K562 (cell line): ENCODE measurements at regions of chr1 and their contacts with region 1.

Region 1: GRCh38 chr1:36223993-36224536 is at the start of gene THRAP3:
- DNase-seq: peak; percentile 98 to 100 (median 98)
- ATAC-seq: peak; percentile 94
- H3K4me3 ChIP-seq: peak within 1 kb of the TSS; percentile 75
- H3K27ac ChIP-seq: peak within 1 kb of the TSS; percentile 93
- H3K4me1 ChIP-seq: peaks cover 14 to 15% of the 10 kb centered on the region in 2 experiments
- H3K27me3 ChIP-seq: no peaks in the 10 kb centered on the region
- CTCF ChIP-seq: 0 out of 6 replicates have a peak, but pooled peaks of 1 of the 3 experiments have one; percentile 7
- EP300 ChIP-seq: peak; percentile 40; the same call in 1 of the 2 replicates
- POLR2A ChIP-seq: peak; percentile 96
- RAD21 ChIP-seq: no peak
- polyA plus RNA-seq, gene THRAP3: 66.2 to 135 TPM

Region 2: DNA sequence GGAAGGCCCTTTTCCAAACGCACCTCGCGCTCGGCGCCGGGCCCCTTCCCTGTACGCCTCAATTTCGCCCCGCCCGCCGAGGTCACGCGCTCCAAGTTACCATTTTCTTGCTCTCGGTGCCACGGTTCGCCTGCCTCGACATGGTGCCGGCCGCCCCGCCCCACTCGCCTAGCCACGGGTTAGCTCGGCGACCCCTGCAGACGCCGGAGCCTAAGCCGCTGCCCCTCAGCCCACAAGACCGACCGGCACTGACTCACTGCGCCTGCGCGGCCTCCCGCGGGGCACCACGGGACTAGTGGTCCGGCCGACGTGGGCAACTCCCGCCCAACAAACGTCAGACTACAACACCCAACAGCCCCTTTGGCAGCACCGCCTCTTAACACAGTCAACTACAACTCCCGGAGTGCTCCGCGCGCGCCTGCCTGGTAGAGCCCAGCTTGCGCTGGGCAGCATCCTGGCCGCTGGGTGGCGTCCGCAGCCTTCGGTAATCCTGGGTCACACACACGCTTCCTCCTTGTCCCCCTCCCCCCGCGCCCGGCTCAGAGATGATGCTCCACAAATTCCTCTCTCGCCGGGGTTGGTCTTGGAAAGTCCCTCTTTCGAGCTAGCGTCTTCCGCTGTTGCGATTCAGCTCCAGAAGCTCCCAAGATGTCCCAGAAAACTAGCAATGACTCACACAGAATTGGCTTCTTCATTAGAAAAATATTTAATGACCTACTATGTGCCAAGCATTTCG is 74.7 kb before region 1 on chr1 and contains the start of gene TRAPPC3:
- CTCF ChIA-PET with region 1: no interaction called
- POLR2A ChIA-PET with region 1: interaction called, 17 read pairs
- in situ Hi-C with region 1: no loop called
- intact Hi-C with region 1: loop called (anchors 2 kb)
- DNase-seq: peak; percentile 98 to 100 (median 99)
- ATAC-seq: peak; percentile 95
- H3K4me3 ChIP-seq: peak within 1 kb of the TSS; percentile 69
- H3K27ac ChIP-seq: peak within 1 kb of the TSS; percentile 87
- H3K4me1 ChIP-seq: peaks cover 31 to 34% of the 10 kb centered on the region in 2 experiments
- H3K27me3 ChIP-seq: no peaks in the 10 kb centered on the region
- CTCF ChIP-seq: peak; percentile 97 to 99 (median 99)
- EP300 ChIP-seq: peak; percentile 43; the same call in 1 of the 2 replicates
- POLR2A ChIP-seq: peak; percentile 95
- RAD21 ChIP-seq: peak; percentile 99 to 100
- polyA plus RNA-seq, gene TRAPPC3: 20.6 to 41.8 TPM

Region 3: GRCh38 chr1:36208978-36209703 is 14.9 kb before region 1 on chr1:
- CTCF ChIA-PET with region 1: no interaction called
- POLR2A ChIA-PET with region 1: interaction called, 48 read pairs
- in situ Hi-C with region 1: no loop called
- intact Hi-C with region 1: no loop called
- DNase-seq: peak in 1 of 4 experiments; percentile 21
- ATAC-seq: 0 out of 3 replicates have a peak, but pooled peaks have one; percentile 14
- H3K4me3 ChIP-seq: no peak overlapping the region
- H3K27ac ChIP-seq: no peak overlapping the region
- H3K4me1 ChIP-seq: peaks cover 7 to 12% of the 10 kb centered on the region in 2 experiments; a peak in 3 of 5 replicates
- H3K27me3 ChIP-seq: no peaks in the 10 kb centered on the region
- CTCF ChIP-seq: peak in 1 of 3 experiments; percentile 19; a peak in 1 of 6 replicates
- EP300 ChIP-seq: no peak
- POLR2A ChIP-seq: no peak
- RAD21 ChIP-seq: peak in 1 of 2 experiments; percentile 40; a peak in 2 of 4 replicates

Region 4: DNA sequence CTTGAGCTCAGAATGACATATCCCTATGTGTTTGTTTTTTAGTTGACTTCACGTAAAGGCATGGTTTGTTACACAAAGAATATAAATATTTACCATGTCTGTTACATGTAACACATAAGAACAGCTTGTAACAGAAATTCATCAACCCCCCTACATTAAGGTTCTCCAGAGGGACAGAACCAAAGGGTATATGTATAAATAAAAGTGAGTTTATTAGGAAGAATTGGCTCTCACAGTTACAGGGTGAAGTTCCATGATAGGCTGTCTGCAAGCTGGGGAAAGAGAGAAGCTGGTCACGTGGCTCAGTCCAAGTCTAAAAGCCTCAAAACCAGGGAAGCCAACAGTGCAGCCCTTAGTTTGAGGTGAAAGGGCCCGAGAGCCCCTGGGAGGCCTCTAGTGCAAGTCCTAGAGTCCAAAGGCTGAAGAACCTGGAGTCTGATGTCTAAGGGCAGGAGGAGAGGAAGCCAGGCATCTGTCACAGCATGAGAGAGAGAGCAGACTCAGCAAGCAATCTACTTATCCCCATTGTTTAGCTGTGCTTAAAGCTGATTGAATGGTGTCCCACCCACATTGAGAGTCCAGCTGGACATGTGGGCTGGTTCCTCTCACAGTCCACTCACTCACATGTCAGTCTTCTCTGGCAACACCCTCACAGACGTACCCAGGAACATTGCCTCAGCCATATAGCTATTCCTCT is 16.0 kb after region 1 on chr1:
- CTCF ChIA-PET with region 1: no interaction called
- POLR2A ChIA-PET with region 1: interaction called, 67 read pairs
- in situ Hi-C with region 1: no loop called
- intact Hi-C with region 1: no loop called
- DNase-seq: peak in 1 of 4 experiments; percentile 24
- ATAC-seq: peak; percentile 54
- H3K4me3 ChIP-seq: no peak overlapping the region
- H3K27ac ChIP-seq: peak overlapping the region; percentile 15; the same call in 1 of the 3 replicates
- H3K4me1 ChIP-seq: peaks cover 6% of the 10 kb centered on the region in 2 experiments; a peak in 4 of 5 replicates
- H3K27me3 ChIP-seq: no peaks in the 10 kb centered on the region
- CTCF ChIP-seq: no peak
- EP300 ChIP-seq: no peak
- POLR2A ChIP-seq: no peak
- RAD21 ChIP-seq: no peak

Region 5: GRCh38 chr1:36248250-36248894 is 24.3 kb after region 1 on chr1:
- CTCF ChIA-PET with region 1: no interaction called
- POLR2A ChIA-PET with region 1: interaction called, 28 read pairs
- in situ Hi-C with region 1: no loop called
- intact Hi-C with region 1: loop called (anchors 2 kb)
- DNase-seq: peak in 2 of 4 experiments; percentile 61 to 93
- ATAC-seq: peak; percentile 97
- H3K4me3 ChIP-seq: no peak overlapping the region
- H3K27ac ChIP-seq: peak overlapping the region; percentile 93
- H3K4me1 ChIP-seq: peaks cover 16 to 31% of the 10 kb centered on the region in 2 experiments; a peak in 4 of 5 replicates
- H3K27me3 ChIP-seq: no peaks in the 10 kb centered on the region
- CTCF ChIP-seq: no peak
- EP300 ChIP-seq: peak; percentile 75
- POLR2A ChIP-seq: no peak
- RAD21 ChIP-seq: 0 out of 4 replicates have a peak, but pooled peaks of 1 of the 2 experiments have one; percentile 11

Region 6: DNA sequence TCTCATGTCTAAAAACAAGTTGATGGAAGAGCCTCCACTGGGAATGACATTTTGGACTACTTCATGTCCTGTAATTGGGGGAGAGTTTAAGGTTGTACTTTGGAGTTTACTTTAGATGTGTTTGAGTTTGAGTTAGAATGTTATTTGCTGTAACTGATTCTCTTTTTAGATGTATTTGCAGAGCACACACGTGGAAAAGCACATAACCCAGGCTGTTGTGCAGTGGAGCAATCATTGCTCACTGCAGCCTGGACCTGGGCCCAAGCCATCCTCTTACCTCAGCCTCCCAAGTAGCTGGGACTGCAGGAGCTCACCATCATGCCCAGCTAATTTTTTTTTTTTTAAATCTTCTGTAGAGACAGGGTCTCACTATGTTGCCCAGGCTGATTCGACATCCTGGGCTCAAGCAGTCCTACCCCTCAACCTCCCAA is 45.4 kb after region 1 on chr1:
- CTCF ChIA-PET with region 1: no interaction called
- POLR2A ChIA-PET with region 1: interaction called, 4 read pairs
- in situ Hi-C with region 1: no loop called
- intact Hi-C with region 1: loop called (anchors 2 kb)
- DNase-seq: no peak
- ATAC-seq: no peak
- H3K4me3 ChIP-seq: no peak overlapping the region
- H3K27ac ChIP-seq: no peak overlapping the region
- H3K4me1 ChIP-seq: peaks cover 5 to 21% of the 10 kb centered on the region in 2 experiments; a peak in 4 of 5 replicates
- H3K27me3 ChIP-seq: no peaks in the 10 kb centered on the region
- CTCF ChIP-seq: no peak
- EP300 ChIP-seq: no peak
- POLR2A ChIP-seq: no peak
- RAD21 ChIP-seq: no peak

Region 7: DNA sequence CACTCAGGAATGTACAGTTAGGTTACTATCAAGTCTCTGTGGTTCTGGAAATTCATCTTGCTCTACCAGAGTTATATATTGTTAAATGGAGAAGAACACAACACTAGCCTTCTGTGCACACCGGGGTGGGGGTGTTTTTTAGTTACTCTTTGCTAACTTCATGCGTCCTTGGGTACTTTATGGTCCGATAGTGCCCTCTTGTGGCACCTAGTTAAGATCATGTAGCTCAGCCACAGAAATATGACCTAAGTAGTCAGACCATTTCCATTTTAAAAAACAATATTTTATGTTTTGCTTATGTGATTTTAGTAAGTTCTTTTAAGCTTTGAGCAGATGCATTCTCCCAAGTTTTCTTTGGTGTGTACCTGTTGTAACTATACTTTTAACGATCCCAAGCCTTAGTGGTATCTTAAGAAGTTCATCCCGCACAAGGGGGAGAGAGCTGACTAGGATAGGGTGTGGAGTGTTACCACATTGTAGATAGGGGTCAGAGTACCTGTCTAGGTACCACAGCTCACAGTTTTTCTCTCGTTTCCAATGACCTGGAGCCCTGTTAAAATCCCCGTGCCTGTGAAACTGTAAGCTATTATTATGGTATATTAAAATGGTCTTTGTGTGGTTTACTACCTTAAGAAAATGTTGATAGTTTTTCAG is 61.5 kb after region 1 on chr1:
- CTCF ChIA-PET with region 1: no interaction called
- POLR2A ChIA-PET with region 1: interaction called, 5 read pairs
- in situ Hi-C with region 1: no loop called
- intact Hi-C with region 1: loop called (anchors 1 kb)
- DNase-seq: peak; percentile 77 to 93 (median 80)
- ATAC-seq: peak; percentile 95
- H3K4me3 ChIP-seq: no peak overlapping the region
- H3K27ac ChIP-seq: no peak overlapping the region
- H3K4me1 ChIP-seq: no peaks in the 10 kb centered on the region
- H3K27me3 ChIP-seq: no peaks in the 10 kb centered on the region
- CTCF ChIP-seq: peak; percentile 77 to 91 (median 81)
- EP300 ChIP-seq: no peak
- POLR2A ChIP-seq: no peak
- RAD21 ChIP-seq: peak; percentile 88 to 93

Region 8: GRCh38 chr1:36369061-36369861 is 145.2 kb after region 1 on chr1:
- CTCF ChIA-PET with region 1: no interaction called
- POLR2A ChIA-PET with region 1: no interaction called
- in situ Hi-C with region 1: no loop called
- intact Hi-C with region 1: no loop called
- DNase-seq: peak; percentile 89 to 91 (median 89)
- ATAC-seq: peak; percentile 61
- H3K4me3 ChIP-seq: no peak overlapping the region
- H3K27ac ChIP-seq: no peak overlapping the region; the same call in 2 of the 3 replicates
- H3K4me1 ChIP-seq: peaks cover 41 to 51% of the 10 kb centered on the region in 2 experiments
- H3K27me3 ChIP-seq: no peaks in the 10 kb centered on the region
- CTCF ChIP-seq: peak; percentile 94 to 96 (median 95)
- EP300 ChIP-seq: no peak
- POLR2A ChIP-seq: 0 out of 2 replicates have a peak, but pooled peaks have one; percentile 11
- RAD21 ChIP-seq: peak; percentile 60 to 80